ENCODE measurements at regions of chr2 and their contacts with region 1.

Region 1: GRCh38 chr2:174326161-174327020 is 8.4 kb upstream of the SP9 start:
- DNase-seq: no peak
- H3K4me3 Mint-ChIP-seq: peak overlapping the region; percentile 55
- H3K27ac Mint-ChIP-seq: no peak overlapping the region
- H3K4me1 Mint-ChIP-seq: peaks cover 18% of the 10 kb centered on the region
- H3K27me3 Mint-ChIP-seq: peaks cover 86% of the 10 kb centered on the region

Region 2: DNA sequence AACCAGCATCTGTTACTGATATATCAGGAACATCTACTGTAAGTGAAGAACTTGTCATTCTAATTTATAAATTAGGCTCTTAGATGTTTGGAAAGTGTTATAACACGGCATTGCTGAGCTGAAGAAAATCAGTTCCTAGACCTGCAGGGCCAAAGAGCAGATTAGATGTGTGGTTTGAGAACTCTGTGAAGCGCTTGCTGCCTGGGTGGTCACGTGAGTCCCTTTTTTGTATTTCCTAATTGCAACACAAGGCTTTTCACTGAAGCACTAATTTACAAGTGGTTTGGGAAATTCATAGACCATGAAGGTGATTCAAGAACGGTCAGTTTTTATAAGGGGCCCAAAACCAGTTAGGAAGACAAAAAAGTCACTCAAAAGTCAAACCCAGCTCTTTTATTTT is 254.3 kb before region 1 on chr2:
- intact Hi-C with region 1: no loop called
- DNase-seq: no peak
- H3K4me3 Mint-ChIP-seq: no peak overlapping the region
- H3K27ac Mint-ChIP-seq: no peak overlapping the region
- H3K4me1 Mint-ChIP-seq: no peaks in the 10 kb centered on the region
- H3K27me3 Mint-ChIP-seq: no peaks in the 10 kb centered on the region

Region 3: DNA sequence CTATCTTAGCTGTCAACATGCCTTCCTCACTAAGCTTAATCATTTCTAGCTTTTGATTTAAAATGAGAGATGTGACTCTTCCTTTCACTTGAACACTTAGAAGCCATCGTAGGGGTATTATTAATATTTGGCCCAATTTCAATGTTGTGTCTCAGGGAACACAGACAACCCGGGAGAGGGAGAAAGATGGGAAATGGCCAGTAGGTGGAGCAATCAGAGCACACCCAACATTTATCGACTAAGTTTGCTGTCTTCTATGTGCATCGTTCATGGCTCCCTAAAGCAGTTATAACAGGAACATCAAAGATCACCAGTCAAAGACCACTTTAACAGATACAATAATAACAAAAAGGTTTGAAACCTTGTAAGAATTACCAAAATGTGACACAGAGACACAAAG is 188.2 kb before region 1 on chr2:
- intact Hi-C with region 1: loop called (anchors 10 kb)
- DNase-seq: no peak
- H3K4me3 Mint-ChIP-seq: no peak overlapping the region
- H3K27ac Mint-ChIP-seq: no peak overlapping the region
- H3K4me1 Mint-ChIP-seq: peaks cover 6% of the 10 kb centered on the region
- H3K27me3 Mint-ChIP-seq: no peaks in the 10 kb centered on the region

Measured in activated T-helper 2 cell treated with anti-CD3 and anti-CD28 coated beads, Interferon-gamma antibody, Interleukin-2, Interleukin-4, amounts not matched to agents 10 μg/mL and 5 μg/mL and 100 μg/mL, durations not matched to agents 14 hours and 24 hours and 36 hours (primary cell).